Activated B cell treated with CpG ODN at 0.5 μM for 24 hours (primary cell): ENCODE measurements at regions of chr19 and their contacts with region 1.

Region 1: GRCh38 chr19:4123615-4124568 is at the start of gene MAP2K2:
- DNase-seq: peak; percentile 97
- ATAC-seq: peak; percentile 96
- H3K4me3 Mint-ChIP-seq: peak within 1 kb of the TSS; percentile 85
- H3K27ac Mint-ChIP-seq: peak within 1 kb of the TSS; percentile 78
- H3K4me1 Mint-ChIP-seq: peaks cover 24% of the 10 kb centered on the region
- H3K27me3 Mint-ChIP-seq: no peaks in the 10 kb centered on the region
- CTCF ChIP-seq: no peak
- total RNA-seq, gene MAP2K2: 126 TPM in 2 replicates

Region 2: GRCh38 chr19:4182084-4182810 is 58.4 kb after region 1 on chr19 and contains the starts of genes ANKRD24 and SIRT6:
- CTCF ChIA-PET with region 1: no interaction called
- POLR2A ChIA-PET with region 1: no interaction called
- intact Hi-C with region 1: loop called (anchors 10 kb)
- DNase-seq: peak; percentile 96
- ATAC-seq: peak; percentile 84
- H3K4me3 Mint-ChIP-seq: peak within 1 kb of the TSS; percentile 97
- H3K27ac Mint-ChIP-seq: peak within 1 kb of the TSS; percentile 94
- H3K4me1 Mint-ChIP-seq: peaks cover 35% of the 10 kb centered on the region
- H3K27me3 Mint-ChIP-seq: no peaks in the 10 kb centered on the region
- CTCF ChIP-seq: no peak
- total RNA-seq, gene ANKRD24: 0.42 and 0.49 TPM in 2 replicates
- total RNA-seq, gene SIRT6: 34.1 and 36.8 TPM in 2 replicates

Region 3: GRCh38 chr19:4232958-4233853 is 109.3 kb after region 1 on chr19:
- CTCF ChIA-PET with region 1: no interaction called
- POLR2A ChIA-PET with region 1: no interaction called
- intact Hi-C with region 1: loop called (anchors 1 kb)
- DNase-seq: peak; percentile 71
- ATAC-seq: no peak
- H3K4me3 Mint-ChIP-seq: peak overlapping the region; percentile 60
- H3K27ac Mint-ChIP-seq: peak overlapping the region; percentile 62
- H3K4me1 Mint-ChIP-seq: peaks cover 16% of the 10 kb centered on the region
- H3K27me3 Mint-ChIP-seq: no peaks in the 10 kb centered on the region
- CTCF ChIP-seq: no peak